HEK293 (cell line): ENCODE measurements at regions of chr14 and their contacts with region 1.

Region 1: GRCh38 chr14:80996049-80996901 is 40.9 kb downstream of the TSHR start:
- H3K4me3 ChIP-seq: no peak overlapping the region
- H3K27ac ChIP-seq: no peak overlapping the region
- H3K4me1 ChIP-seq: no peaks in the 10 kb centered on the region
- CTCF ChIP-seq: peak; percentile 12; the same call in 1 of the 2 replicates

Region 2: DNA sequence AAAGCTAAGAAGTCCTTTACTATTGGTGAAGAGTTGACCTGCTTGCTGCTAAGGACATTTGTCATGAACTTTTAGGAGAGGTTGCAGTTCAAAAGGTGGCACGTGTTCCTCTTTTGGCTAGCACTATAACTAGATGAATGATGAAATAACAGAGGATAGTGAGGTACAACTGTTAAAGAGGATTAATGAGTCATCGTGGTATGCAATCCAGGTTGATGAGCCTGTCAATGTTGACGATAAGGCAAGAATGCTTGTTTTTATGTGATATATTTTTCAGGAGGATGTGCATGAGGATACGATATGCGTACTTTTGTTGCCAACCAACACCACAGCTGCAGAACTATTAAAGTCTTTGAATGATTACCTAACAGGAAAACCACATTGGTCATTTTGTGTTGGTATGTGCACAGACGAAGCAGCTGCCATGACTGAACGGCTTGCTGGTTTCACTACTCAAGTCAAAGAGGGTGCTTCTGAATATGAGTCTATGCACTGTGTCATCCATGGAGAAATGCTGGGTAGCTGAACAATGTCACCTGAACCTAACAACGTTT is 65.4 kb before region 1 on chr14:
- CTCF ChIA-PET with region 1: no interaction called
- POLR2A ChIA-PET with region 1: no interaction called
- H3K4me3 ChIP-seq: no peak overlapping the region
- H3K27ac ChIP-seq: no peak overlapping the region
- H3K4me1 ChIP-seq: no peaks in the 10 kb centered on the region
- CTCF ChIP-seq: no peak

Region 3: GRCh38 chr14:80954687-80955299 is 41.5 kb before region 1 on chr14:
- CTCF ChIA-PET with region 1: interaction called, 11 read pairs
- POLR2A ChIA-PET with region 1: no interaction called
- H3K4me3 ChIP-seq: peak overlapping the region; percentile 55
- H3K27ac ChIP-seq: no peak overlapping the region; the same call in 1 of the 2 replicates
- H3K4me1 ChIP-seq: no peaks in the 10 kb centered on the region
- CTCF ChIP-seq: peak; percentile 60

Region 4: GRCh38 chr14:81164167-81164774 is 168.0 kb after region 1 on chr14:
- CTCF ChIA-PET with region 1: interaction called, 45 read pairs
- POLR2A ChIA-PET with region 1: no interaction called
- H3K4me3 ChIP-seq: no peak overlapping the region
- H3K27ac ChIP-seq: no peak overlapping the region
- H3K4me1 ChIP-seq: no peaks in the 10 kb centered on the region
- CTCF ChIP-seq: no peak

Region 5: GRCh38 chr14:81170104-81170828 is 174.0 kb after region 1 on chr14:
- CTCF ChIA-PET with region 1: interaction called, 45 read pairs
- POLR2A ChIA-PET with region 1: no interaction called
- H3K4me3 ChIP-seq: peak overlapping the region; percentile 55
- H3K27ac ChIP-seq: peak overlapping the region; percentile 80
- H3K4me1 ChIP-seq: no peaks in the 10 kb centered on the region
- CTCF ChIP-seq: peak; percentile 61